Naive thymus-derived CD4-positive, alpha-beta T cell (primary cell): ENCODE measurements at regions of chrX and their contacts with region 1.

Region 1: GRCh38 chrX:150365051-150365989 is 2.2 kb downstream of the MAMLD1 start:
- DNase-seq: peak in 8 of 9 donors; percentile 19 to 79 (median 46)
- ATAC-seq: peak; percentile 61
- H3K4me3 ChIP-seq: peak overlapping the region; percentile 50
- H3K4me3 Mint-ChIP-seq: peak overlapping the region; percentile 81 to 96 (median 87)
- H3K27ac ChIP-seq: no peak overlapping the region
- H3K27ac Mint-ChIP-seq: peak overlapping the region in 4 of 9 donors; percentile 11 to 80 (median 42)
- H3K4me1 ChIP-seq: peaks cover 0 to 11% of the 10 kb centered on the region in 2 donors
- H3K4me1 Mint-ChIP-seq: peaks cover 0 to 32% (median 19%) of the 10 kb centered on the region in 7 donors
- H3K27me3 ChIP-seq: peaks cover 0 to 5% of the 10 kb centered on the region in 2 donors
- H3K27me3 Mint-ChIP-seq: peaks cover 0 to 22% (median 9%) of the 10 kb centered on the region in 5 donors

Region 2: GRCh38 chrX:149539283-149540130 is 825.8 kb before region 1 on chrX:
- CTCF ChIA-PET with region 1: no interaction called
- POLR2A ChIA-PET with region 1: no interaction called
- intact Hi-C with region 1: loop called in 1 of 2 experiments (anchors 10 kb)
- DNase-seq: peak; percentile 65 to 91 (median 86)
- ATAC-seq: peak; percentile 67
- H3K4me3 ChIP-seq: peak overlapping the region; percentile 66
- H3K4me3 Mint-ChIP-seq: peak overlapping the region; percentile 74 to 99 (median 90)
- H3K27ac ChIP-seq: peak overlapping the region; percentile 90
- H3K27ac Mint-ChIP-seq: peak overlapping the region; percentile 88 to 100 (median 94)
- H3K4me1 ChIP-seq: peaks cover 3 to 5% of the 10 kb centered on the region in 2 donors
- H3K4me1 Mint-ChIP-seq: peaks cover 0 to 15% (median 4%) of the 10 kb centered on the region in 7 donors
- H3K27me3 ChIP-seq: no peaks in the 10 kb centered on the region
- H3K27me3 Mint-ChIP-seq: no peaks in the 10 kb centered on the region

Region 3: DNA sequence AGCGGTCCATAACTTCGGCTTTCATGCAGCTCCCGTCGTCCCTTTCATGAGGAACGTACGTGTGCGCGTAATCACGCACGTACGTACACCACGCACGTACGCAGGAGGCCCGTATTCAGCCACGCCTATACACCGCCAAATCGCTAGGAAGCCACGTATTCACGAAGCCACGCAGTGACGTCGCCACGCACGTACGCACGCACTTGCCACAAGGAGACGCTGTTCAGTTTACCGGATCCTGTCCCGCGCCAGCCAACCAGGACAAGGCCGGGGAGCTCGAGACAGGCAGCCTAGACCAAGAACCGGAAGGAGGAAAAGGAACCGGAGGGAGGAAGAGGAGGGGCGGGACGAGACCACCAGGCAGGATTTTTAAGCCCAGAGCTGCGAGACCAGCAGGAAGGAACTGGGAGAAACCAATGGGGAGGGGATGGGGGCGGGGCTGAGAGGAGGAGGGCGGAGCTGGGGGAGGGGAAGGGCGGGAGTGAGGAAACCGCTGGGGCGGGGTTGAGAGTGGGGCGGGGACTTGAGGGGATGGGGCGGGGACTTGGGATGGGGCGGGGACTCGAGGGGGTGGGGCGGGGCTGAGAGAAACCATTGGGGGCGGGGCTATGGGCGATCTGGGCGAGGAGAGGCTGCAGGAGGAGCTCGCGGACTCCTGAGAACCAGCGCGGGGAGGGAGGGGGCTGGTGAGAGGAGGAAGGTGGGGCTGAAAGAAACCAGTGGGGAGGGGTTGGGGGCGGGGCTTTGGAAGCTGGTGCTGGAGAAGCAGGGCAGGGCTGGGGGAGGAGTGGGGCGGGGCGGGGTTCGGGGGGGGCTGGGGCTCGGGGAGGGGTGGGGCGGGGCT is 426.7 kb before region 1 on chrX and contains the start of gene EOLA2:
- CTCF ChIA-PET with region 1: no interaction called
- POLR2A ChIA-PET with region 1: interaction called, 4 read pairs
- intact Hi-C with region 1: loop called in 1 of 2 experiments (anchors 10 kb)
- DNase-seq: peak; percentile 67 to 96 (median 92)
- ATAC-seq: peak; percentile 67
- H3K4me3 ChIP-seq: peak within 1 kb of the TSS; percentile 57
- H3K4me3 Mint-ChIP-seq: peak within 1 kb of the TSS; percentile 81 to 98 (median 92)
- H3K27ac ChIP-seq: peak within 1 kb of the TSS; percentile 90
- H3K27ac Mint-ChIP-seq: peak within 1 kb of the TSS; percentile 92 to 99 (median 99)
- H3K4me1 ChIP-seq: peaks cover 5% of the 10 kb centered on the region in 2 donors
- H3K4me1 Mint-ChIP-seq: peaks cover 0 to 7% (median 0%) of the 10 kb centered on the region in 7 donors
- H3K27me3 ChIP-seq: no peaks in the 10 kb centered on the region
- H3K27me3 Mint-ChIP-seq: no peaks in the 10 kb centered on the region
- total RNA-seq, gene EOLA2: 43.1 to 59.1 (median 45.4) TPM

Region 4: DNA sequence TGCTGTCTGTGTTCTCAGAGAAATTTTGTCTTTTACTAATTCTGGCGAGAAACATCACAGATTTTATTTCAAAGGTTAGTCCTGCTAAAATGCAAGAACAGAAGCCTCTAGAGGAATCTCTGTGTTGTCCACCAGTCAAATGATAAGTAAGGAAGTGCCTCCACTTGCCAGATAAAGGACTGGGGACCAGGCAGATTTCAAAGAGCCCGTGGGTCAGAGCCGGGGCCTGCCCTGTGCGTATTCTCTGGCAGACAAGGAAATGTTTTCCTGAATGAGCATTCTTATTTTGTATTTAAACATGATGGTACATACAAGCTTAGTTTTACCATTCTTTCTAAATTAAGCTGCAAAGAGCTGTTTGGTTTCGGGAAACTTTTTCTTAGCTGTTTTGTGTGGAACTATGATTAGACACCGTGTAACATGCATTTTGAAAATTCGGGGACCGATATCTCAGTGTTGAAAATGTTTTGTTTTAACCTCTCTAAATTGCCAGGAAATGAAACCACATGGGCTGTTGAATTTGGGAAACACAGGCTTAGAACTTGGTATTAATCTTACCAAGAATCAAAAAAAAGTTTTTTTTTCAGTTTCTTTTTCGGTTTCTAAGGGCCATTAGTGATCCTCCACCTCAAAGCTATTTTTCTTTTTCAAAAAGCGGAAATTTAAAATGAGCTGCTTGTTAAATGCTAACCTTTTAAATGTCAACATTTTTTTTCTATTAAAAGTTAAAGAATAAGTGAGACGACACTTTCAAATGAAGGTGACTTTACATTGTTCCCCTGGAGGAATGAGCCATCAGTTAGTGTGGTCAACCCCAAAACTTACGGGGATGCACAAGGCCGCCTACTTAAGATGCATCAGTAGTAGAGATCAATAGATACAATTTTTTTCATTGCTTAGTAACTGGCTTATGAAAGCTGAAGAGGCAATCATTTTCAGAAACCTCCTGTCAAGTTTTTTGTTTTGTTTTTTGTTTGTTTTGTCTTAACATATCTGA is 113.5 kb after region 1 on chrX:
- CTCF ChIA-PET with region 1: interaction called, 3 read pairs
- POLR2A ChIA-PET with region 1: no interaction called
- intact Hi-C with region 1: loop called in 1 of 2 experiments (anchors 1 kb)
- DNase-seq: peak in 4 of 9 donors; percentile 4 to 31 (median 24)
- ATAC-seq: peak; percentile 46
- H3K4me3 ChIP-seq: peak overlapping the region; percentile 46
- H3K4me3 Mint-ChIP-seq: peak overlapping the region; percentile 51 to 81 (median 76)
- H3K27ac ChIP-seq: peak overlapping the region; percentile 41
- H3K27ac Mint-ChIP-seq: peak overlapping the region in 8 of 9 donors; percentile 84 to 97 (median 85)
- H3K4me1 ChIP-seq: peaks cover 3 to 14% of the 10 kb centered on the region in 2 donors
- H3K4me1 Mint-ChIP-seq: peaks cover 6 to 67% (median 34%) of the 10 kb centered on the region in 7 donors
- H3K27me3 ChIP-seq: no peaks in the 10 kb centered on the region
- H3K27me3 Mint-ChIP-seq: no peaks in the 10 kb centered on the region

Region 5: GRCh38 chrX:150568320-150569154 is 203.2 kb after region 1 on chrX and contains the start of gene MTM1:
- CTCF ChIA-PET with region 1: no interaction called
- POLR2A ChIA-PET with region 1: no interaction called
- intact Hi-C with region 1: loop called (anchors 1 kb)
- DNase-seq: peak; percentile 80 to 93 (median 90)
- ATAC-seq: peak; percentile 96
- H3K4me3 ChIP-seq: peak within 1 kb of the TSS; percentile 71
- H3K4me3 Mint-ChIP-seq: peak within 1 kb of the TSS; percentile 68 to 92 (median 90)
- H3K27ac ChIP-seq: peak within 1 kb of the TSS; percentile 75
- H3K27ac Mint-ChIP-seq: peak within 1 kb of the TSS; percentile 81 to 92 (median 89)
- H3K4me1 ChIP-seq: peaks cover 31 to 36% of the 10 kb centered on the region in 2 donors
- H3K4me1 Mint-ChIP-seq: peaks cover 6 to 45% (median 41%) of the 10 kb centered on the region in 7 donors
- H3K27me3 ChIP-seq: no peaks in the 10 kb centered on the region
- H3K27me3 Mint-ChIP-seq: no peaks in the 10 kb centered on the region
- total RNA-seq, gene MTM1: 21.8 to 34.7 (median 28.8) TPM

Region 6: DNA sequence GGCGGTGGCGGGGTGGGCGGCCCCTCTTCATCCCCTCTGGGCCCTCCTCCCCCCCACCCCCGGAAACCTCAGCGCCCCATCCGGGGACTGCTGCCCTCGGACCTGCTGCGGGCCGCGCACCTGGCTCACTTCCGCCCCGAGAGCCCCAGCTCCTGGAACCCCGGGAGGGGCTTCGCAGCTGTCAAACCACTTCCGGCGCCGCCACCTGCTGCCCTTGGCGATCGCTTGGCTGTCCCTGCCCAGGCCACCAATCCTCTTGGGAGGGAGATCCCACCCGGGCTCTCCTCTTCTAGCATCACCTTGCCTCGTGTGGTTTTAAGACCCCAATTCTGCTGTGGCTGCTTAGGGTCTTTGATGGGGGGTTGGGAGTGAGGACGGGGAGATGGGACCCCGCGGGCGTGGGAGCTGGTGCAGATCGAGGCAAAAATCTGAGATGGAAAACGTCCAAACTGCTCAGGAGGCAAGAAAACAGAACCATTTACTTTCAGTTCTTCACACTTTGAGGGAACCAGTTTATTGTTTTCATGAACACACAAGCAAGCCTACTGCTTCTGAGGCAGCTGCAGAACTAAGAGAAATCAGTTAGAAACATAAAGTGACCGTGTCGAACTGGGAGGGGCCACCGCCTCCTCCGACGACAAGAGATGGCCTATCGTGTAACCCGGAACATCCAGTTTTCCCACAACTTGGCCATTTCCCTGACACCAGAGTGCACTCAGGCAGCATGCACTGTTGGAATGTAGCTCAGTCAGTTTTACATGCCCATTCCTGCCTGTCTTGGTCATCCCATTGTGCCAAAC is 328.7 kb after region 1 on chrX:
- CTCF ChIA-PET with region 1: no interaction called
- POLR2A ChIA-PET with region 1: no interaction called
- intact Hi-C with region 1: loop called (anchors 1 to 5 kb)
- DNase-seq: peak; percentile 12 to 65 (median 51)
- ATAC-seq: peak; percentile 62
- H3K4me3 ChIP-seq: peak overlapping the region; percentile 61
- H3K4me3 Mint-ChIP-seq: peak overlapping the region; percentile 85 to 98 (median 94)
- H3K27ac ChIP-seq: peak overlapping the region; percentile 80
- H3K27ac Mint-ChIP-seq: peak overlapping the region; percentile 95 to 99 (median 97)
- H3K4me1 ChIP-seq: peaks cover 37 to 42% of the 10 kb centered on the region in 2 donors
- H3K4me1 Mint-ChIP-seq: peaks cover 25 to 68% (median 61%) of the 10 kb centered on the region in 7 donors
- H3K27me3 ChIP-seq: no peaks in the 10 kb centered on the region
- H3K27me3 Mint-ChIP-seq: no peaks in the 10 kb centered on the region